GM18951 (cell line): ENCODE measurements at regions of chr2 and their contacts with region 1.

Region 1: DNA sequence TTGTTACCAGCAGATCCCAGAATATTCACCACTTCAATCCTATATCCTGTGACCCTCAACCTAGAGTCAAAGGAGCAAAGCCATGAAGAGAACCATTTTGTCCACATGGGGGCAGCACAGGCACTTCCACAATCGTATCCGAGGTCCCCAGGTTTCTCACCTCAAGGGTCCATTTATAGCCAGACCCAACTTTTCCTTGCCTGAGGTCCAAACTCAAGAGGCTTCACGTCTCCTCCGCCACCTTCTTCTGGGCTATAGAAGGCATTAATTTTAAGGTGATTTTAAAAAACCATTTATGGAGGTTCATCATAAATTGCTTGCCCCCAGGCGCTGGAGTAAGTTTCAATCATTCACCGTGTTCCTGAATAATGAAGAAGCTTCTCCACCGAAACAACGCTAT is 111.6 kb upstream of the NABP1 start:
- POLR2A ChIP-seq: no peak

Region 2: GRCh38 chr2:191691016-191691735 is 124.8 kb after region 1 on chr2:
- in situ Hi-C with region 1: loop called (anchors 5 kb)
- POLR2A ChIP-seq: no peak

Region 3: GRCh38 chr2:191748059-191748461 is 181.7 kb after region 1 on chr2:
- in situ Hi-C with region 1: no loop called
- POLR2A ChIP-seq: no peak